ENCODE measurements at regions of chr5 and their contacts with region 1.

Region 1: DNA sequence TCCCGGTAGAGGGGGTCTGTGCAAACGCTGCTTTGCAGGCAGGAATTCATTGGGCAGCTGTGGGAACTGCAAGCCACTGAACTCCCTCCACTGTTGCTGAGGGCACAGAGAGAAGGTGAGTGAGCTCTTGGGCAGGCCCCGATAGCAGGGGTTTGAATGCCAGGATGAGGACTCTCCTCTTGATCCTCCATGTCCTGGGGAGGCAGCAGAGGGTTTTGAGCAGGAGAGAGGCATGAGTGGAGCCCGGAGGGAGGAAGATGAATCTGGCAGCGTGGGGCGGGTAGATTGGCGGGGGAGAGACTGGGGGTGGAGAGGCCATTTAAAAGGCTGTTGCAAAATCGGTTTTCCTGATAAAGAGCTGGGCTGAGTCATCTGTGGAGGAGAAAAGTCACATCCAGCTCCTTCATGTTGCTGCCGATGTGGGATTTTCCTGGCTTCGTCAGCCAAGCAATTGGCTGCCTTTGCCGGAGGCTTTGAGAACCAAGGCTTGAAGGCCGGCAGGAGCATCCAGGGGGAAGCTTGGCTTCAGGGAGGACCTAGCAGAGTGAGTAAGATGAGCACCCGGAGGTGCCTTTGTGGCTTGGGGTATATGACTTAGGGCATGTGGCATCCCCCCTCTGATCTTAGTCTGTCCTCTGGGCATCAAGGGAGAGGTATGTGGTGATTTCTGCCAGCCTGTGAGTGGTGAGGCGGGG is at the start of gene SYNPO:
- DNase-seq: peak; percentile 74 to 84
- ATAC-seq: peak; percentile 42 to 72 (median 58)
- H3K4me3 ChIP-seq: peak within 1 kb of the TSS; percentile 26 to 63 (median 52)
- H3K27ac ChIP-seq: peak within 1 kb of the TSS; percentile 91 to 100 (median 96)
- H3K4me1 ChIP-seq: peaks cover 53 to 100% (median 95%) of the 10 kb centered on the region in 9 donors
- H3K27me3 ChIP-seq: no peaks in the 10 kb centered on the region
- CTCF ChIP-seq: no peak
- total RNA-seq, gene SYNPO: 589 to 777 (median 703) TPM

Region 2: DNA sequence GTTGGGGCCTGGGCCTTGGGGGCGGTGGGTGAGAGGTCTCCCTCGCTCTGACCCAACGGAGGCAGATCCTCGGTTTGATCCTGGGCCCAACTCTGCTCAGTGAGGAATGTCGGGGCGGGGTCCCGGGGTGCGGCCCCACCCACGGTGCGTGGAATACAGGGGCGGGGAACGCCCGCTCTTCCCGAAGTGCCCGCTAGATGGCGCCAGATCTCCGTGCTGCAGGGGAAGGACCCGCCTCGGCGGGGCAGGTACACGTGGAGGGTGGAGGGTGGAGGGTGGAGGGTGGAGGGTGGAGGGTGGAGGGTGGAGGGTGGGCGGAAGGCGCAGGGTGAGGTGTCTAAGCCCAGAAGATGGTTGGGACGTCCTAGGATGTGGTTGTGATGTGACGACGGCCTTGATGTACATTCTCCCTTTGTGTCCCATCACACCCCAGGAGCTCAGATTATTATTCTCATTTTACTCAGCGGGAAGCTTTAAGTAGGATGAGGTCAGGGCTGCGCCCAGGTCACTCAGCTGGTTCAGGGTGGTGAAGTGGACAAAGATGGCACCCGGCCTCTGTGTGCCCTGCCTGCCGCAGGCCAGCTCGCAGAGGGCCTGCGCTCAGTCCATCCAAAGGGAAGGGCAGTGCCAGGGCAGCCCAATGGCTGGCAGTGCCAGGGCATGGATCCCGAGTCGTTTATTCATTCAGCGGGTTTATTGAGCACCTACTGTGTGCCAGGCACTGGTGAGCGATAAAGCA is 181.5 kb before region 1 on chr5:
- intact Hi-C with region 1: no loop called
- DNase-seq: peak; percentile 77 to 87
- ATAC-seq: peak; percentile 92 to 97 (median 94)
- H3K4me3 ChIP-seq: peak overlapping the region in 5 of 10 donors; percentile 18 to 40 (median 32)
- H3K27ac ChIP-seq: peak overlapping the region in 5 of 10 donors; percentile 16 to 65 (median 27)
- H3K4me1 ChIP-seq: peaks cover 0 to 33% (median 13%) of the 10 kb centered on the region in 9 donors
- H3K27me3 ChIP-seq: no peaks in the 10 kb centered on the region
- CTCF ChIP-seq: peak; percentile 78 to 89 (median 85)

Region 3: GRCh38 chr5:150589871-150590601 is 50.4 kb before region 1 on chr5:
- intact Hi-C with region 1: loop called in 4 of 10 experiments (anchors 5 kb)
- DNase-seq: peak; percentile 72 to 83
- ATAC-seq: peak; percentile 65 to 90 (median 83)
- H3K4me3 ChIP-seq: no peak overlapping the region
- H3K27ac ChIP-seq: peak overlapping the region in 9 of 10 donors; percentile 3 to 90 (median 74)
- H3K4me1 ChIP-seq: peaks cover 34 to 65% (median 58%) of the 10 kb centered on the region in 9 donors
- H3K27me3 ChIP-seq: no peaks in the 10 kb centered on the region
- CTCF ChIP-seq: peak; percentile 71 to 94 (median 82)

Region 4: GRCh38 chr5:150599917-150600499 is 40.5 kb before region 1 on chr5:
- intact Hi-C with region 1: loop called in 2 of 10 experiments (anchors 5 kb)
- DNase-seq: peak; percentile 89 to 91
- ATAC-seq: peak; percentile 56 to 80 (median 62)
- H3K4me3 ChIP-seq: peak overlapping the region in 6 of 10 donors; percentile 12 to 35 (median 20)
- H3K27ac ChIP-seq: peak overlapping the region; percentile 40 to 90 (median 82)
- H3K4me1 ChIP-seq: peaks cover 38 to 99% (median 84%) of the 10 kb centered on the region in 9 donors
- H3K27me3 ChIP-seq: no peaks in the 10 kb centered on the region
- CTCF ChIP-seq: no peak

Region 5: DNA sequence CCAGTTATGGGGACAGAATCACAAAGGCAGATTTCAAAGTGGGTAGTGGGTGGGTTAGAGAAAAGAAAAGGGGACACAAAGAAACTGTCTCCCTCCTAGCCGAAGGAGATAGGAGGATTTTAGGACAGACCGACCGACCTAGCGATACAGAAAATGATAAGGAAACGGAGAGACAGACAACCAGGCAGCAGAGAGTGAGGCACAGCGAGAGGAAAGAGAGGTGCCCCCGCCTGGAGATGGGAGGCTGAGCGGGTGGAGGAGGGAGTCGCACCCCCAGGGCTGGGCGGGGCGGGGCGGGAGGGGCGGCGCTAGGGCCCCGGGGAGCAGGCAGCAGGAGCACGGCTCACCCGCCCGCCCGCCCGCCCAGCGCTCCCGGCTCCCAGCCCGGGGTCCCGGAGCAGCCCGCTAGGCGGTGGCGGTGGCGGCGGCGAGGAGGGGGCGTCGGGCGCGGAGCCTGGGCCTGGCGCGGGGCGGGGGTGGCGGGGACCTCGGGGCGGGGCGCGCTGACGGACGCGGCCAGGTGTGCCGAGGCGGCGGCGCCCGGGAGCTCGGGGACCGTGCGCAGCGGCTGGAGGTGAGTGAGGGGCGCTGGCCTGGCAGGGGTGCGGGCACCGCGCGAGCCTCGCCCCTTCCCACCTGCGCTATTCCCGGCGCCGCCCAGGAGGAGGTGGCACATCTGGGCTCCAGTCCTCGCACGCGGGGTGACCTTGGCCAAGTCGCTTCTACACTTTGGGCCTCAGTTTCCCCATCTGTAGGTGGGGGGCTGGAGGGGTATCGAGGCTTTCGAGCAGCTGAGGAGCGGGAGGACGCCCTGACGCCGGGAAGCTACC is 15.9 kb before region 1 on chr5:
- intact Hi-C with region 1: loop called in 2 of 10 experiments (anchors 2 kb)
- DNase-seq: peak in 1 of 2 donors; percentile 60
- ATAC-seq: peak; percentile 16 to 56 (median 20)
- H3K4me3 ChIP-seq: peak overlapping the region; percentile 64 to 99 (median 84)
- H3K27ac ChIP-seq: peak overlapping the region; percentile 94 to 100 (median 98)
- H3K4me1 ChIP-seq: peaks cover 20 to 88% (median 77%) of the 10 kb centered on the region in 9 donors
- H3K27me3 ChIP-seq: peaks cover 0 to 20% (median 0%) of the 10 kb centered on the region in 7 donors
- CTCF ChIP-seq: peak in 4 of 9 donors; percentile 16 to 46 (median 26)

Region 6: DNA sequence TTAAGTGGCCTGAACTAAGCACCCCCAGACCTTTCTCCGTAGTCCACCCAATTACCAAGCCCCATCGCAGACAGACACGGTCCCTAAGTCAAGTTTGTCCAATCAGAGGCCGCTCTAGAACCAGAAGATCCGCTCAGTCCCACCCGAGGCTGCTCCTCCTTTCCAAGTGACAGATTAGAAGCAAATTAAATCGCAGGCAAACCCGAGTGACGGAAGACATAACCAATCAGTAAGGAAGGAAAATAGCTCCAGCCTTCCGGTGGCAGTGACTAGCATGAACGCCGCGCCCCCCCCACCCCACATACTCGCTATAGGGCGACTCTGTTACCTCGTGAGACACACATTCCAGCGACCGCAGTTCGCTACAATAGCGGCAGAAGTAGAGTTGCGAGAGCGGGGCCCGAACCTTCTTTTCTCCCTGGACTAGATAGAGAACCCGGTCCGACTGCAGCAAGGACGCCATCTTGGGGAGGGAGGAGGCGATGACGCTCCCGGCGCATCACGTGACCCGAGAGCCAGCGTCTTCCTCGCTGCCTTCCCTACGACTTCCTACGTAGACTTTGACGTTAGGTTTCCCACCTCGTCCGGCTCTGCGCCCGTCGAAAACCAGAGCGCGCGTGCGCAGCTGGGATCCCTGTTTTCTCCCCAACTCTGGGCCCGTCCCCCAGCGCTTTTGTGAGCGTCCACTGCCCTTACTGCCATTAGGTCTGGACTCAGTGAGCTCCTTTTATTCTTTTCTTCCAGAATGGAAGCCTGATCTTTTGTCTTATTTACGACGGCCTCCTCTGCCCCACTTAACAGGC is 118.3 kb after region 1 on chr5 and contains the start of gene DCTN4:
- intact Hi-C with region 1: no loop called
- DNase-seq: peak; percentile 96 to 97
- ATAC-seq: peak; percentile 93 to 98 (median 96)
- H3K4me3 ChIP-seq: peak within 1 kb of the TSS; percentile 56 to 88 (median 67)
- H3K27ac ChIP-seq: peak within 1 kb of the TSS; percentile 90 to 96 (median 94)
- H3K4me1 ChIP-seq: peaks cover 4 to 64% (median 31%) of the 10 kb centered on the region in 9 donors
- H3K27me3 ChIP-seq: no peaks in the 10 kb centered on the region
- CTCF ChIP-seq: peak in 3 of 9 donors; percentile 27 to 40 (median 27)
- total RNA-seq, gene DCTN4: 42.9 to 68.3 (median 58.2) TPM

Measured in heart right ventricle (tissue), 16 donors.